BJ (cell line): ENCODE measurements at regions of chr3 and their contacts with region 1.

Region 1: GRCh38 chr3:115687721-115688120 is 64.4 kb downstream of the GAP43 start:
- DNase-seq: no peak
- H3K4me3 ChIP-seq: no peak overlapping the region
- H3K27me3 ChIP-seq: no peaks in the 10 kb centered on the region
- CTCF ChIP-seq: no peak

Region 2: DNA sequence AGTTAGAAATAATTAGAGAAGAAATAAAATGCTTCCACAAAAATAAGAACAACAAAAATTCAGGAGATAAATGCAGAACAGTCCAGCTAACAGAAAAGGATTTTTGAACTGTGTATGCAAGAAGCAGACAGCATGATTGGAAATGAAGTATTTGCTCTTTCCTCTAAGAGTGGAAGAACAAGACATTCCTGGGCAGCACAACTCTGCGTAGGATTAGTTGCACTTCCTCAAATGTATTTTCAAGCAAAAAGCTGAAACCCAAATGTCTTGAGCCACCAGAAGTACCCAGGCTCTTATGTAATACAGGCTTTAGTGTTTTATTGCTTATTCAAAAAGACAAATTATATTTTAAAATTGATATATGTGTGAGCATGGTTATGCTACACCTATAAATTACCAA is 667.8 kb before region 1 on chr3:
- CTCF ChIA-PET with region 1: no interaction called
- POLR2A ChIA-PET with region 1: no interaction called
- DNase-seq: no peak
- H3K4me3 ChIP-seq: no peak overlapping the region
- H3K27me3 ChIP-seq: no peaks in the 10 kb centered on the region
- CTCF ChIP-seq: no peak

Region 3: GRCh38 chr3:115666081-115666480 is 21.6 kb before region 1 on chr3:
- CTCF ChIA-PET with region 1: interaction called, 5 read pairs
- POLR2A ChIA-PET with region 1: interaction called, 10 read pairs
- DNase-seq: no peak
- H3K4me3 ChIP-seq: no peak overlapping the region
- H3K27me3 ChIP-seq: no peaks in the 10 kb centered on the region
- CTCF ChIP-seq: no peak